PC-3 (cell line): ENCODE measurements at regions of chr3 and their contacts with region 1.

Region 1: GRCh38 chr3:161630794-161631193 is 134.2 kb downstream of the OTOL1 start:
- DNase-seq: peak; percentile 38
- ATAC-seq: peak; percentile 33; the same call in 1 of the 2 replicates
- H3K4me3 ChIP-seq: no peak overlapping the region
- H3K27ac ChIP-seq: no peak overlapping the region
- H3K4me1 ChIP-seq: no peaks in the 10 kb centered on the region
- H3K27me3 ChIP-seq: peaks cover 18% of the 10 kb centered on the region; the same call in 1 of the 2 replicates
- CTCF ChIP-seq: no peak

Region 2: GRCh38 chr3:161423911-161424522 is 206.8 kb before region 1 on chr3:
- CTCF ChIA-PET with region 1: no interaction called
- POLR2A ChIA-PET with region 1: no interaction called
- intact Hi-C with region 1: no loop called
- DNase-seq: peak; percentile 86
- ATAC-seq: peak; percentile 16; the same call in 1 of the 2 replicates
- H3K4me3 ChIP-seq: no peak overlapping the region
- H3K27ac ChIP-seq: peak overlapping the region; percentile 96
- H3K4me1 ChIP-seq: peaks cover 51% of the 10 kb centered on the region
- H3K27me3 ChIP-seq: no peaks in the 10 kb centered on the region
- CTCF ChIP-seq: peak; percentile 77

Region 3: DNA sequence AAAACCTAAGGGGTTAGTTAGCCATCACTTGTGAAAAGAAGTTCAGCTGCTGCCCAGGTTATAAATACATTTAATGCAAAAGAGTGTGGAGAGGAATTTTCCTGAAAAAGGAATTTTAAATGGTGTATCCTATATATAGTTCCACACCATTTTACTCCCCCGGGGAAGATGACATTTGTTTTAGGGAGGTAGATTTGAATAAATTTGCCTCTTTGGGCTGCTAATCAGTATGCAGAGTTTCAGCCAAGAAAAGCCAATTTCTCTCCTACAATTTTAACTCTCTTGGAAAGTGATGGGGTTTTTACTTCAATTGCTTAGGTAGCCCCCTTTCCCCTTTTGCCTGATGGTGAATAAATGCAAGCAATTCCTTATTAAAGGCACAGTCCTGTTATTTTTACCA is 27.0 kb after region 1 on chr3:
- CTCF ChIA-PET with region 1: no interaction called
- POLR2A ChIA-PET with region 1: no interaction called
- intact Hi-C with region 1: no loop called
- DNase-seq: no peak
- ATAC-seq: no peak
- H3K4me3 ChIP-seq: no peak overlapping the region
- H3K27ac ChIP-seq: no peak overlapping the region
- H3K4me1 ChIP-seq: no peaks in the 10 kb centered on the region
- H3K27me3 ChIP-seq: peaks cover 23% of the 10 kb centered on the region
- CTCF ChIP-seq: no peak

Region 4: GRCh38 chr3:161793194-161793930 is 162.6 kb after region 1 on chr3:
- CTCF ChIA-PET with region 1: interaction called, 11 read pairs
- POLR2A ChIA-PET with region 1: no interaction called
- intact Hi-C with region 1: no loop called
- DNase-seq: peak; percentile 42
- ATAC-seq: peak; percentile 46
- H3K4me3 ChIP-seq: no peak overlapping the region
- H3K27ac ChIP-seq: no peak overlapping the region
- H3K4me1 ChIP-seq: peaks cover 3% of the 10 kb centered on the region; the same call in 1 of the 2 replicates
- H3K27me3 ChIP-seq: no peaks in the 10 kb centered on the region
- CTCF ChIP-seq: no peak